ENCODE measurements at regions of chr9 and their contacts with region 1.

Region 1: GRCh38 chr9:103522409-103522808 is 527.3 kb downstream of the CYLC2 start:
- DNase-seq: no peak
- ATAC-seq: no peak
- H3K4me3 ChIP-seq: no peak overlapping the region
- H3K27ac ChIP-seq: no peak overlapping the region
- H3K4me1 ChIP-seq: no peaks in the 10 kb centered on the region
- H3K27me3 ChIP-seq: no peaks in the 10 kb centered on the region
- CTCF ChIP-seq: no peak
- EP300 ChIP-seq: no peak
- POLR2A ChIP-seq: no peak
- RAD21 ChIP-seq: no peak

Region 2: DNA sequence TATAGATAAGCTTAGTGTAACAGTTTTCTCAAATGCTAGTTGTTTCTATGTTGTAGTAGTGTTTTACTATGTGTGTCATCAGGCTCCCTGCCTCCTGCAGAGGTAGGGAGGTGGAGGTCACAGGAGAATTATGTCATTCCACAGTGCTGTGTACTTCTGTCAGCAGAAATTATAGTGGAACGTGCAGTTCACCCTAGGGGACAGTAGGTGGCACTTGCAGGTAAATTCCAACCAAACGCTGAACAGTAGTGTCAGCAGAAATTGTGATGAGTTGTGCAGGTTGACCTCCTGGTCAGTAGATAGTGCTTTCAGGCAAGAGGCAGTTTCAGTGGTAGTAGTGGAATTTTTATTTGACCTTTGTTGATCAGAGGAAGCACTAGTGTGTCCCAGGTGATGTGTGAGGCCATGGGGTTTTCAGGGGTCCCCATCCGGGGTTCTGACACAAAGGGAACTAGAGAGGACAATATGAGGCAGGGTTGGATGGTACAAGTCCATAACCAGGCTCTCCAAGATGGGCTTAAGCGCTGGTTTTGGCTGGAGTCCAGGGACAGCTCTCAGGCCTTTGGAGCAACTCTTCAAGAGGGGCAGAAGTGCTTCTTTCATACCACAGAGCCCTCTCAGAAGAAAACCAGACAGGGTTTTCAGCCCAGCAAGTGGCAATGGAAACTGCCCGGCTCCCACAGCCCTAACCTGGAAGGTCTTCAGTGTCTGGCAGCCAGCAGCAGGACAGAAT is 124.4 kb before region 1 on chr9:
- CTCF ChIA-PET with region 1: no interaction called
- POLR2A ChIA-PET with region 1: no interaction called
- RAD21 ChIA-PET with region 1: no interaction called
- SMC1A ChIA-PET with region 1: no interaction called
- in situ Hi-C with region 1: no loop called
- intact Hi-C with region 1: no loop called
- DNase-seq: no peak
- ATAC-seq: peak; percentile 88
- H3K4me3 ChIP-seq: no peak overlapping the region
- H3K27ac ChIP-seq: no peak overlapping the region
- H3K4me1 ChIP-seq: no peaks in the 10 kb centered on the region
- H3K27me3 ChIP-seq: no peaks in the 10 kb centered on the region
- CTCF ChIP-seq: peak; percentile 71 to 72 (median 71); a peak in 5 of 6 replicates
- EP300 ChIP-seq: no peak
- POLR2A ChIP-seq: no peak
- RAD21 ChIP-seq: peak; percentile 64

Region 3: DNA sequence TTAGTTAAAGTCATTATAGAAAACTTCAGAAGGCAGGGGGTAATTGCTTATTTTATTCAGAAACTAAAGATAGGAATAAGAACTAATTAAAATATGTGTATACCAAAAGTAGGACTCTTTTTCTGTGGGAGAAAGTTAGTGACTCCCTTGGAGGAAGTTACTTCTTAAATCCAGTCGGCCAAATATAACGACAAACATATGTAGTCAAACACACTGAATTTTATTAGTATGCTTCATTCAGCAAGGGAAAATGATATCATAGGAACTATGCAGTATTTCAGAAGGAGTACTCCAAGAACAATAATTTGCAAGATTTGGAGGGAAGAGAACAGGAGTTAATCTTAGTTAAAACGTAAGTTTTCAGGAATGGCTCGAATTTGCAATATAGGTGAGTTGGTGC is 94.7 kb before region 1 on chr9:
- CTCF ChIA-PET with region 1: no interaction called
- POLR2A ChIA-PET with region 1: no interaction called
- RAD21 ChIA-PET with region 1: no interaction called
- SMC1A ChIA-PET with region 1: no interaction called
- in situ Hi-C with region 1: no loop called
- intact Hi-C with region 1: no loop called
- DNase-seq: no peak
- ATAC-seq: no peak
- H3K4me3 ChIP-seq: no peak overlapping the region
- H3K27ac ChIP-seq: no peak overlapping the region
- H3K4me1 ChIP-seq: no peaks in the 10 kb centered on the region
- H3K27me3 ChIP-seq: no peaks in the 10 kb centered on the region
- CTCF ChIP-seq: no peak
- EP300 ChIP-seq: no peak
- POLR2A ChIP-seq: no peak
- RAD21 ChIP-seq: no peak

Region 4: GRCh38 chr9:103552712-103553111 is 30.3 kb after region 1 on chr9:
- CTCF ChIA-PET with region 1: no interaction called
- POLR2A ChIA-PET with region 1: no interaction called
- RAD21 ChIA-PET with region 1: no interaction called
- SMC1A ChIA-PET with region 1: interaction called, 3 read pairs
- in situ Hi-C with region 1: no loop called
- intact Hi-C with region 1: loop called (anchors 5 kb)
- DNase-seq: no peak
- ATAC-seq: no peak
- H3K4me3 ChIP-seq: no peak overlapping the region
- H3K27ac ChIP-seq: no peak overlapping the region
- H3K4me1 ChIP-seq: no peaks in the 10 kb centered on the region
- H3K27me3 ChIP-seq: no peaks in the 10 kb centered on the region
- CTCF ChIP-seq: no peak
- EP300 ChIP-seq: no peak
- POLR2A ChIP-seq: no peak
- RAD21 ChIP-seq: no peak